Common myeloid progenitor, CD34-positive (primary cell): ENCODE measurements at regions of chr11 and their contacts with region 1.

Region 1: GRCh38 chr11:133947321-133947756 is 9.4 kb downstream of the IGSF9B start:
- DNase-seq: peak; percentile 44 to 80 (median 70)
- H3K4me3 ChIP-seq: no peak overlapping the region
- H3K27ac ChIP-seq: no peak overlapping the region
- H3K4me1 ChIP-seq: peaks cover 0 to 6% (median 1%) of the 10 kb centered on the region in 4 experiments
- H3K27me3 ChIP-seq: peaks cover 0 to 58% (median 19%) of the 10 kb centered on the region in 5 experiments

Region 2: GRCh38 chr11:133957900-133958299 is 10.6 kb after region 1 on chr11:
- CTCF ChIA-PET with region 1: interaction called, 14 read pairs
- POLR2A ChIA-PET with region 1: no interaction called
- DNase-seq: peak in 2 of 3 donors; percentile 51 to 52
- H3K4me3 ChIP-seq: no peak overlapping the region
- H3K27ac ChIP-seq: no peak overlapping the region
- H3K4me1 ChIP-seq: peaks cover 0 to 26% (median 14%) of the 10 kb centered on the region in 4 experiments
- H3K27me3 ChIP-seq: peaks cover 0 to 74% (median 38%) of the 10 kb centered on the region in 5 experiments

Region 3: GRCh38 chr11:134079317-134079716 is 132.0 kb after region 1 on chr11:
- CTCF ChIA-PET with region 1: no interaction called
- POLR2A ChIA-PET with region 1: no interaction called
- DNase-seq: no peak
- H3K4me3 ChIP-seq: no peak overlapping the region
- H3K27ac ChIP-seq: no peak overlapping the region
- H3K4me1 ChIP-seq: no peaks in the 10 kb centered on the region
- H3K27me3 ChIP-seq: no peaks in the 10 kb centered on the region